Esophagus muscularis mucosa (tissue), 4 donors: ENCODE measurements at regions of chr6 and their contacts with region 1.

Region 1: GRCh38 chr6:133184798-133185372 is 56.3 kb upstream of the EYA4 start:
- DNase-seq: no peak
- H3K4me3 ChIP-seq: no peak overlapping the region
- H3K27ac ChIP-seq: no peak overlapping the region
- H3K4me1 ChIP-seq: no peaks in the 10 kb centered on the region
- H3K27me3 ChIP-seq: no peaks in the 10 kb centered on the region
- CTCF ChIP-seq: peak; percentile 41 to 46 (median 44)
- EP300 ChIP-seq: no peak
- POLR2A ChIP-seq: no peak

Region 2: DNA sequence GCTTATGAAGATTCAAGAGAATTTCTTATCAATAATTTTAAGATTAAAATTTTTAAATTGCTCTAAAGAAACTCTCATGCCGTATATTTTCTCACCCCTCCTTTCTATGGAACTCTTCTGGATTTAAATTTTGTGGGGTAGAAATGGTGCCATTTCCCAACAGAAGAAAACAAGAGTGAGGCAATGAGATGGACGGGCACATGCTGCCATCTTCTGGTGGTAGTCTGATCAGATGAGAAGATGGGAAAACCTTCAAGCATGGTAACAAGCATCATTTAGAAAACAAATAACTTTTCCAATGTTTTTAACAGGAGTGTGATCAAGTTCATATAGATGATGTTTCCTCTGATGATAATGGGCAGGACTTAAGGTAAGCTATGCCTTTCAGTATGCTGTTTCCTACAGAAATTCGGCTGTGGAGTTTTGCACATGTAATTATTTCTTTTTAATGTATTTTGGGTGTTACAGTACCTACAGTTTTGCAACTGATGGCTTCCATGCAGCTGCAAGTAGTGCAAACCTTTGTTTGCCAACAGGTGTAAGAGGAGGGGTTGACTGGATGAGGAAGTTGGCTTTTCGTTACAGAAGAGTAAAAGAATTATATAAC is 327.6 kb after region 1 on chr6:
- intact Hi-C with region 1: loop called (anchors 10 kb)
- DNase-seq: no peak
- H3K4me3 ChIP-seq: no peak overlapping the region
- H3K27ac ChIP-seq: no peak overlapping the region
- H3K4me1 ChIP-seq: no peaks in the 10 kb centered on the region
- H3K27me3 ChIP-seq: no peaks in the 10 kb centered on the region
- CTCF ChIP-seq: peak; percentile 57 to 61 (median 57)
- EP300 ChIP-seq: no peak
- POLR2A ChIP-seq: no peak

Region 3: GRCh38 chr6:133553652-133554051 is 368.8 kb after region 1 on chr6:
- intact Hi-C with region 1: loop called (anchors 2 kb)
- DNase-seq: no peak
- H3K4me3 ChIP-seq: no peak overlapping the region
- H3K27ac ChIP-seq: no peak overlapping the region
- H3K4me1 ChIP-seq: peaks cover 0 to 29% (median 27%) of the 10 kb centered on the region in 4 donors
- H3K27me3 ChIP-seq: no peaks in the 10 kb centered on the region
- CTCF ChIP-seq: peak; percentile 57 to 69 (median 62)
- EP300 ChIP-seq: no peak
- POLR2A ChIP-seq: no peak